ENCODE measurements at regions of chr1 and their contacts with region 1.

Region 1: GRCh38 chr1:156226116-156226538 is 13.3 kb downstream of the PMF1 start:
- DNase-seq: peak; percentile 71
- CTCF ChIP-seq: no peak

Region 2: GRCh38 chr1:156060937-156061636 is 165.0 kb before region 1 on chr1 and contains the start of gene RAB25:
- in situ Hi-C with region 1: no loop called
- DNase-seq: no peak
- CTCF ChIP-seq: no peak

Region 3: GRCh38 chr1:156146020-156146768 is 79.9 kb before region 1 on chr1:
- in situ Hi-C with region 1: loop called (anchors 10 kb)
- DNase-seq: peak; percentile 79
- CTCF ChIP-seq: peak; percentile 66

Measured in GM13977 (cell line).